ENCODE measurements at regions of chr1 and their contacts with region 1.

Region 1: GRCh38 chr1:214941061-214941460 is 141.5 kb upstream of the KCNK2 start:
- DNase-seq: no peak
- ATAC-seq: no peak
- H3K4me3 ChIP-seq: no peak overlapping the region
- H3K27ac ChIP-seq: no peak overlapping the region
- H3K4me1 ChIP-seq: no peaks in the 10 kb centered on the region
- H3K27me3 ChIP-seq: no peaks in the 10 kb centered on the region
- CTCF ChIP-seq: no peak
- POLR2A ChIP-seq: no peak
- RAD21 ChIP-seq: no peak

Region 2: DNA sequence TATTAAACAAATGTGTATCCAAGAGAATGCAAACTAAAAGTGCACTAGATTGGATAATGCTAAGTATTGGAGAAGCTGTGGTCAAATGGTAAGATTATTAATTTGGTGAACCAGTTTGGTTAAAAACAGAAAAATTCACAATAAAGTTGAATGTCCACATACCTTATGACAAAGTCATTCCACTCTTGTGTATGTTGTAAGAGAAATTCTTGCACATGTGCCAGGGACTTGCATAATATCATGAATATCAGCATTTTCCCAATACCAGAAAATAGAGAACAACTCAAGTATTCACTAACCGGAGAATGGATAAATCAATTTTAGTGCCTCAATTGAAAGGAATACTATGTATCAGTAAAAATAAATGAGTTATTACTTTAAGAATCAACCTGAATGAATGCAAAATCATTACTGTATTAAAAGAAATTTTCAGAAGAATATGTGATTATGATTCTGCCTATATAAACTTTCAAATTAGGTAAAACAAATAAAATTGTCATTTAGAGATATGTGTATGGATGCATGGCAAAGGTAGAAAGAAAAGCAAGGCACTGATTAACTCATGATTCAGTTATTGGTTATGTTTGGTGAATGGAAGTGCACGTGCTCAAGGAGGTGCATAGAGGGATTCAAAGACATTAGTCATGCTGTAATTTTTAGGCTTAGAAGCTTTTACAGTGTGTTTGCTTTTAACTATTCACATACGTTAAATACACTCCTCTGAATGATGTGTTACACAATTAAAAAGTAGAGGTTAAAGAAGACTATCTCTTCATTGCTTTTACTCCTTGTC is 76.0 kb before region 1 on chr1:
- CTCF ChIA-PET with region 1: no interaction called
- POLR2A ChIA-PET with region 1: no interaction called
- RAD21 ChIA-PET with region 1: no interaction called
- intact Hi-C with region 1: loop called (anchors 5 kb)
- DNase-seq: no peak
- ATAC-seq: no peak
- H3K4me3 ChIP-seq: no peak overlapping the region
- H3K27ac ChIP-seq: no peak overlapping the region
- H3K4me1 ChIP-seq: no peaks in the 10 kb centered on the region
- H3K27me3 ChIP-seq: no peaks in the 10 kb centered on the region
- CTCF ChIP-seq: no peak
- POLR2A ChIP-seq: no peak
- RAD21 ChIP-seq: no peak

Region 3: GRCh38 chr1:215215846-215216245 is 274.8 kb after region 1 on chr1:
- CTCF ChIA-PET with region 1: no interaction called
- POLR2A ChIA-PET with region 1: no interaction called
- RAD21 ChIA-PET with region 1: no interaction called
- intact Hi-C with region 1: no loop called
- DNase-seq: no peak
- ATAC-seq: no peak
- H3K4me3 ChIP-seq: no peak overlapping the region
- H3K27ac ChIP-seq: no peak overlapping the region
- H3K4me1 ChIP-seq: no peaks in the 10 kb centered on the region
- H3K27me3 ChIP-seq: no peaks in the 10 kb centered on the region
- CTCF ChIP-seq: no peak
- POLR2A ChIP-seq: no peak
- RAD21 ChIP-seq: no peak

Measured in HCT116 (cell line).